ENCODE measurements at regions of chr7 and their contacts with region 1.

Region 1: GRCh38 chr7:123682690-123683089 is 27.0 kb downstream of the LMOD2 start:
- DNase-seq: peak; percentile 12 to 35 (median 13)
- H3K4me3 ChIP-seq: no peak overlapping the region
- H3K4me3 Mint-ChIP-seq: no peak overlapping the region
- H3K27ac ChIP-seq: no peak overlapping the region
- H3K27ac Mint-ChIP-seq: no peak overlapping the region
- H3K4me1 ChIP-seq: no peaks in the 10 kb centered on the region
- H3K4me1 Mint-ChIP-seq: no peaks in the 10 kb centered on the region
- H3K27me3 ChIP-seq: no peaks in the 10 kb centered on the region
- H3K27me3 Mint-ChIP-seq: no peaks in the 10 kb centered on the region
- CTCF ChIP-seq: peak; percentile 62

Region 2: GRCh38 chr7:122255454-122255853 is 1427.2 kb before region 1 on chr7:
- intact Hi-C with region 1: no loop called
- DNase-seq: no peak
- H3K4me3 ChIP-seq: no peak overlapping the region
- H3K4me3 Mint-ChIP-seq: no peak overlapping the region
- H3K27ac ChIP-seq: no peak overlapping the region
- H3K27ac Mint-ChIP-seq: no peak overlapping the region
- H3K4me1 ChIP-seq: no peaks in the 10 kb centered on the region
- H3K4me1 Mint-ChIP-seq: no peaks in the 10 kb centered on the region
- H3K27me3 ChIP-seq: no peaks in the 10 kb centered on the region
- H3K27me3 Mint-ChIP-seq: peaks cover 0 to 3% (median 0%) of the 10 kb centered on the region in 3 donors
- CTCF ChIP-seq: no peak

Region 3: DNA sequence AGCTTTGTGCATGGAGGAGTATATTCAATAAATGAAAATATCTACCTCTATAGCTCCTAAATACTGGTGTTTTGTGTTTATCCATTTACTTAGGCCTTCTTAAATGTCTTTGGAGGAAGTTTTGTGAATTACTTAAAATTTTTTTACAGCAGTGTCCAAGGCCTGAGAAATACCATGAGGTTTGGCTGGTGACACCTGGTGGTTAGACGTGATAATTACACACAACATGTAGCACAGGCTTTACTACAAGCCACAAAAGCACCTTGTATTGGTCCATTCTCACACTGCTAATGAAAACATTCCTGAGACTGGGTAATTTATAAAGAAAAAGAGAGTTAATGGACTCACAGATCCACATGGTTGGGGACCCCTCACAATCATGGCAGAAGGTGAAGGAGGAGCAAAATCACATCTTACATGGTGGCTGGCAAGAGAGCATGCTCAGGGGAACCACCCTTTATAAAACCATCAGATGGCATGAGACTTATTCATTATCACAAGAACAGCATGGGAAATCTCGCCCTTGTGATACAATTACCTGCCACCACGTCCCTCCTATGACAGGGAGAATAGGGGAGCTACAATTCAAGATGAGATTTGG is 182.9 kb after region 1 on chr7:
- intact Hi-C with region 1: loop called in 1 of 2 experiments (anchors 5 kb)
- DNase-seq: peak; percentile 41 to 59 (median 59)
- H3K4me3 ChIP-seq: no peak overlapping the region
- H3K4me3 Mint-ChIP-seq: no peak overlapping the region
- H3K27ac ChIP-seq: no peak overlapping the region
- H3K27ac Mint-ChIP-seq: peak overlapping the region in 2 of 7 donors; percentile 7 to 74
- H3K4me1 ChIP-seq: peaks cover 26 to 31% of the 10 kb centered on the region in 2 donors
- H3K4me1 Mint-ChIP-seq: peaks cover 39% of the 10 kb centered on the region
- H3K27me3 ChIP-seq: no peaks in the 10 kb centered on the region
- H3K27me3 Mint-ChIP-seq: peaks cover 0 to 5% (median 5%) of the 10 kb centered on the region in 3 donors
- CTCF ChIP-seq: peak; percentile 86

Measured in CD14-positive monocyte (primary cell).